ENCODE measurements at regions of chr18 and their contacts with region 1.

Region 1: DNA sequence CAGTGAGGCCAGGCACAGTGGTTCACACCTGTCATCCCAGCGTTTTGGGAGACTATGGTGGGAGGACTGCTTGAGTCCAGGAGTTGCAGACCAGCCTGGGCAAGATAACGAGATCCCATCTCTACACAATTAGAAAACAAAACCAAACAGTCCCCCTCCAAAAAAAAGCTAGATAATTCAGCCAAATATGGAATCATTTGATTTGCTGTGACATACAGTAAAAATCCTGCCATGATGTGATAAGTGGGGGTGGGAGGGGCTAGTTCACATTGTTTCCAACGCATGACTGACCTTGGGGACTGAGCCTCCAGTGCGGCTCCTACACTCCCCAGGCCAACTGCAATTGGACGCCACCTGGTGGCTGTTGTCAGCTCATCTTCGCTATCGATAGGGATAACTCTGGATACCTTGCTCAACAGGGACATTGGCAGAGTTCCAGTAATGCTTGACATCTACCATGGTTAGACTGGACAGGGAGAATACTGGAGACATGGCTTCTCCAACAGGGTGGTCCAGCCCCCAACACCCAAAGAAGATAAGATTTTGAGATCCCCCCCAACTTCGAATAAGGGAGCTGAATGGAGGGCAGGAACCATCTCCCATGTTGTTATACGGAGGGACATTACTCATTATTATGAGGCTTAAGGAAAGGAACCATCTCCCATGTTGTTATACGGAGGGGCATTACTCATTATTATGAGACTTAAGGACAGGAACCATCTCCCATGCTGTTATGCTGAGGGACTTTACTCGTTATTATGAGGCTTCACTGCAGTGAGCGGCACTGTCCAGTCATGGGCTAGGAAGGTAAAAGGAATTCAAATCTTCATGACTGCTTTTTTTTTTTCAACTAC is 135.9 kb downstream of the TGIF1 start:
- DNase-seq: peak; percentile 83 to 96
- H3K4me3 ChIP-seq: no peak overlapping the region
- CTCF ChIP-seq: no peak
- POLR2A ChIP-seq: no peak

Region 2: DNA sequence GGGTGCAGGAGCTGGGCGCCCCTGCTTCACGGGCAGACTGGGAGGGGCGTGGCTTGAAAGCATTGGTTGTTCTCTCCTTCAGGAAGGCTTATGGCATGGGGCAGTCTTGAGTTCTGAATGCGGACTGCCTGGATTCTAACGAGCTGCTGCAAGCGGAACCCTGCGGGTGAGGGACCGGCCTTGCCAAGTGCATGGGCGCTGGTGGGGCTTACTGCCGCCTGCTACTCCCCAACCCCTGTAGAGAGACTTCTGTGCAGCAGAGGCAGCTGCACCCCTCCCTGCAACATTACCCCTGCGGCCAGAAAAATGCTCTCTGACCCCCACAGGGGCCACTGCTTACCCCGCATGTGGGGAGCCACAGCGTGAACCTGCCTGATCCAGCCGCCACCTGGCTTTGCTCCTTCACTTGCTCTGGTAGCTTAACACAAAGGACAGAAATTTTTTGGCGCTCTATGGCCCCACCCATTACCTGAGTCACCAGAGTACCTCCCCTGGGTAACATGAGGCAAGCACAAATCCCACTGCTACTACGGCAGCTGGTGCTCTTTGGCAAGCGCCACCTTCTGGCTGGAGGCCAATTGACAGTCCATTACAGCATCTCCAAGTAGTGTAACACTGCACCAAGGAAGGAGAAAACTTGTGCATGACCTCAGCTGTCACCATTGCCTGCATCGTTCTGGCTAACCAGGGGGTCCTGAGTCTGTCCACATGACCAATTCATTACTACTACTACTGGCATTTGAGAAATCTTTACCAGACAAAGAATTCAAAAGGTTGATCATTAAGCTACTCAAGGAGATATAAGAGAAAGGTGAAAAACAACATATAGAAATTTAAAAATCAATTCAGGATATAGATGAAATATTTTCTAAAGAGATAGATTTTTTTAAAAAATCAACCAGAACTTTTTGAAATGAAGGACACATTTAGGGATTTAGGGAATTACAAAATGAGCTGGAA is 288.6 kb before region 1 on chr18:
- intact Hi-C with region 1: loop called (anchors 10 kb)
- DNase-seq: peak; percentile 88 to 96
- H3K4me3 ChIP-seq: peak overlapping the region; percentile 34
- CTCF ChIP-seq: peak in 1 of 3 donors; percentile 40
- POLR2A ChIP-seq: no peak

Region 3: DNA sequence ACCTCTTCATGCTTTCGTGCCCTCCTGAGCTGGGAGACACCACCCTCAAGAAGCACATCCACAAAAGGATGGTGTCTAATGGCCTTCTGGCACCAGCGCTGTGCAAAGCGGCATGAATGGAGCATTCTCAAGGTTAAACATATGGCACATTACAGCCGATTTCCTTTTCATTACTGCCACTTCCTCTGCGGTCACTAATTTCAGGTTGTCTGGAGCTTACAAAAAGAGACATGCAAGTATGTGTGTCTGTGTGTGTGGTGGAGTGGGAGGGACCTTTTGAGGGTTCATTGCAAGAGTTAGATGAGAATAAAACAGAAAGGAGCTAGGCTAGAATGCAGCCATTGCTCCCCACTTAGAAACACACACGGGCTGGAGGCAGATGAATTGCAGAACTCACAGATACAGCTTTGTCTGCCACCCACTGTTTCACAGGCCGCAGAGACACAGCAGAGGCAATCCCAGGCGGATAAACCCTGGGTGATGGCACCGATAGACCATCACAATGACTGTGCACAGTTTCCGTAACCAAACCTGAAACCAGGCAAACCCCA is 59.9 kb before region 1 on chr18:
- intact Hi-C with region 1: no loop called
- DNase-seq: peak in 1 of 2 donors; percentile 62
- H3K4me3 ChIP-seq: no peak overlapping the region
- CTCF ChIP-seq: no peak
- POLR2A ChIP-seq: no peak

Region 4: DNA sequence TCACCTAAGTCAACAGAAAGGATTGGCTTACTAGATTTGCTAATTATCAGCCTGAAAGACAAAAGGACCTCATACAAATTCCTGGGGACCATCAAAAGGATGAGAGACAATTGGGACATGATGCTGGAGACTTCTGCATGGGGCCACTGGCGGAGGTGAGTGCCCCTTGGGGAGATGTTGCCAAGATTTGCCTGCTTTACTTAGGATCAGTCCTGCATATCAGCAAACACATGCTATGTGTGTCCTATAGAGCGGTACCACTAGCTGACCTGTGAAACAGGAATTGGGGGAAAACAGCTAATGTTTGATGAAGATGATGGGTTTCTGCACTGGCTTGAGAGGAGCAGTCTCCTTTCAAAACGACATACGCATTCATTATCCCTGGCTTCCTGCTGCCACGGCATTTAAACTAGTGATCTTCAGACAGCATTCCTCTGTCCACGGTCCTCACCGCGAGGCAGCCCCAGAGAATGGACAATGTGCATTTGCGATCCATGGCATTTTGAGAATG is 31.7 kb before region 1 on chr18:
- intact Hi-C with region 1: loop called (anchors 1 kb)
- DNase-seq: no peak
- H3K4me3 ChIP-seq: no peak overlapping the region
- CTCF ChIP-seq: no peak
- POLR2A ChIP-seq: no peak

Measured in lower leg skin (tissue), 4 donors.